K562 (cell line): ENCODE measurements at regions of chr17 and their contacts with region 1.

Region 1: GRCh38 chr17:28937044-28937729 is 14.1 kb downstream of the PHF12 start:
- DNase-seq: no peak
- ATAC-seq: no peak
- H3K4me3 ChIP-seq: no peak overlapping the region
- H3K27ac ChIP-seq: no peak overlapping the region
- H3K4me1 ChIP-seq: peaks cover 0 to 16% of the 10 kb centered on the region in 2 experiments; a peak in 3 of 5 replicates
- H3K27me3 ChIP-seq: no peaks in the 10 kb centered on the region
- CTCF ChIP-seq: no peak
- EP300 ChIP-seq: no peak
- POLR2A ChIP-seq: no peak
- RAD21 ChIP-seq: no peak

Region 2: DNA sequence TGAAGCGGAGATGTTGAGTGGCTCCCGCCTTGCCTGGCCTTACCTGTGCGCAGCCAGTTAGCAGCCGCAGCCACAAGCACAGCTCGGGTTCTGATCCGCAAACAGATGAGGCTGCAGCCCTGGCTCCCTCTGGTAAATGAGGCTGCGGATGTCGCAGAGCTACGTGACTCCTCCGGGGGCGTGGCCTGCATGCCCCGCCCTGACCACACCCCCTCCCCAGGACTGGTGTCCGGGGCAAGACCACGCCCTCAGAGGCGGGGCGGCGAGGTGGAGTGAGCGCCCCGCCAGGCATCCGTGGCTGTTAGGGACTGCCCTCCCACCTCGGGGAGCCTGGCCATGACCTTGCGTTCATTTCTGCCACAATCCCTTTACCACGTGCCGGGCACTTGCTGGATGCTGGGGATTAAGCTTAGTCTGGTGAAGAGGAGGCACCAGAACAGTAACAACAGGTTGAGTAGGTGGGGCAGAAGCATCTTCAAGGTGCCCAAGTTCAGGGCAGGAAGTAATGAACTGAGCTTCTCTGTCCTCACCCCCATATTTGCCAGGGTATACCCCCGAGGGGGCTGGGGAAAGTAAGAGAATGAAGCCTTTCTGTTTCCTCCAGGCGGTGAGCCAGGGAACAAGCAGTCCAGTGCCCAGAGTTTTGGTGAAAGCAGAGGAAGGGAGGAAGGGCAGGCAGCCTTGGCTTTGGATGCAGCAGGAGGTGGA is 360.3 kb before region 1 on chr17 and contains the start of gene ALDOC:
- CTCF ChIA-PET with region 1: no interaction called
- POLR2A ChIA-PET with region 1: interaction called, 5 read pairs
- in situ Hi-C with region 1: loop called (anchors 5 kb)
- intact Hi-C with region 1: no loop called
- DNase-seq: peak; percentile 100
- ATAC-seq: peak; percentile 97
- H3K4me3 ChIP-seq: peak within 1 kb of the TSS; percentile 44
- H3K27ac ChIP-seq: peak within 1 kb of the TSS; percentile 91
- H3K4me1 ChIP-seq: peaks cover 30 to 32% of the 10 kb centered on the region in 2 experiments
- H3K27me3 ChIP-seq: no peaks in the 10 kb centered on the region
- CTCF ChIP-seq: no peak
- EP300 ChIP-seq: peak; percentile 28; the same call in 1 of the 2 replicates
- POLR2A ChIP-seq: peak; percentile 98
- RAD21 ChIP-seq: no peak
- polyA plus RNA-seq, gene ALDOC: 93.5 to 124 TPM

Region 3: DNA sequence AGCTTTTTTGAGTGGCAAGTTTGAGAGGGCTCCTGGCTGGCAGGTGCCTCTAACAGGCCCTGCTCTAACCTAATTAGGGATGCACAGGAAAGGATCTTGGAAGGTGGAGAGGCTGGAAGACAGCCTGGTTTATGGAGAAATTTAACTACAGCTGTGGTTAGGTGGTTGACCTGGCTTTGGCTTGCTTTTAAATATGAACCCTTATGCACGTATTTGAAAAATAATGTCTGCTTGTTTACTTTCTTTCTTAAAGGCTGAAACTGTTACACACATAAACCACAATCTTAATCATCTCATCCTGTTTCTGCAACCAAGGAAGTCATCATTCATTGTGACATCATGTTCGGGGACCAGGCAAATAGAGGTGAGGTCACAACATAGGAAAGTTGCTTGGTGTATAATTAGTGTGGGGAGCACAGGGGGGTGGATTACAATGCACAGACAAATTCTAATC is 11.2 kb before region 1 on chr17:
- CTCF ChIA-PET with region 1: no interaction called
- POLR2A ChIA-PET with region 1: interaction called, 25 read pairs
- in situ Hi-C with region 1: no loop called
- intact Hi-C with region 1: no loop called
- DNase-seq: peak in 1 of 4 experiments; percentile 61
- ATAC-seq: peak; percentile 65
- H3K4me3 ChIP-seq: no peak overlapping the region
- H3K27ac ChIP-seq: peak overlapping the region; percentile 41; the same call in 2 of the 3 replicates
- H3K4me1 ChIP-seq: peaks cover 6 to 45% of the 10 kb centered on the region in 2 experiments
- H3K27me3 ChIP-seq: no peaks in the 10 kb centered on the region
- CTCF ChIP-seq: no peak
- EP300 ChIP-seq: peak; percentile 66; the same call in 1 of the 2 replicates
- POLR2A ChIP-seq: no peak
- RAD21 ChIP-seq: no peak

Region 4: GRCh38 chr17:28951991-28952975 is 15.1 kb after region 1 on chr17:
- CTCF ChIA-PET with region 1: no interaction called
- POLR2A ChIA-PET with region 1: interaction called, 24 read pairs
- in situ Hi-C with region 1: no loop called
- intact Hi-C with region 1: no loop called
- DNase-seq: peak; percentile 89 to 99 (median 92)
- ATAC-seq: peak; percentile 83
- H3K4me3 ChIP-seq: peak overlapping the region; percentile 59
- H3K27ac ChIP-seq: peak overlapping the region; percentile 100
- H3K4me1 ChIP-seq: peaks cover 15 to 18% of the 10 kb centered on the region in 2 experiments
- H3K27me3 ChIP-seq: peaks cover 0 to 7% of the 10 kb centered on the region in 2 experiments; a peak in 2 of 5 replicates
- CTCF ChIP-seq: peak in 1 of 3 experiments; percentile 20; a peak in 1 of 6 replicates
- EP300 ChIP-seq: no peak; the same call in 1 of the 2 replicates
- POLR2A ChIP-seq: peak; percentile 86
- RAD21 ChIP-seq: no peak